ENCODE measurements at regions of chr9 and their contacts with region 1.

Region 1: GRCh38 chr9:83937911-83938323 is 16.7 kb upstream of the KIF27 start:
- DNase-seq: peak in 1 of 2 donors; percentile 81
- H3K4me3 ChIP-seq: no peak overlapping the region
- H3K27ac ChIP-seq: no peak overlapping the region
- H3K4me1 ChIP-seq: peaks cover 8 to 18% (median 15%) of the 10 kb centered on the region in 4 donors
- H3K27me3 ChIP-seq: no peaks in the 10 kb centered on the region
- CTCF ChIP-seq: peak in 4 of 7 experiments; percentile 52 to 68 (median 61)
- EP300 ChIP-seq: no peak
- POLR2A ChIP-seq: no peak

Region 2: DNA sequence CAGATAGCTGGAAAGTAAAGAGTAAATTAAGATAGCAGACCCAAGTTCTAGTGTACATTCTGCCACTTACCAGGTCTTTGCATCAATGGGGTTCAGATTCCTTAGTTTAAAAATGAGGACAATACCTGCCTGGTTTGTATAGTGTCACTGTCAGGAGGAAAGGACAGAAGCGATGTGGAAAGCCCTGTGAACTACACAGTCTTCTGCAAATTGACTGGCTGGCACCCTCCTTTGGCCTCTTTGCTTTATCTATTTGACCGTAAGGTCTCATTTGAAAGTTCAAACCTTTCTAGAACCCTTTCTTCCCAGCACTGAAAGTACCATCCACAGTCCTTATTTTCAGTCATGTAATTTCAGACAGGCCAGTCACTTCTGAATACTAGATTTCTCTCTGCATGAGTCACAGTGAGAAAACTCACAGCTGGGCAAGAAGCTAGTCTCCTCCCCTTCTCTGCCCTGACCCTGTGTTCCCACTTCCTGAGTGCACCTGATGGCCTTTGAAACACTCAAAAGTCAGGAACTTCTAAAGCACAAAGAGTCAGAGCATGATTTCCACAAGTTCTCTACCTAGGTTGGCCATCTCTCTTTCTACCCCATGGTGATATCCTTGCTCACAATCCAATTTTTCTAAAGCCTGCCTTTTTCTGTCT is 783.7 kb before region 1 on chr9:
- intact Hi-C with region 1: no loop called
- DNase-seq: peak; percentile 50 to 77
- H3K4me3 ChIP-seq: no peak overlapping the region
- H3K27ac ChIP-seq: peak overlapping the region; percentile 59 to 79 (median 70)
- H3K4me1 ChIP-seq: peaks cover 0 to 9% (median 7%) of the 10 kb centered on the region in 4 donors
- H3K27me3 ChIP-seq: no peaks in the 10 kb centered on the region
- CTCF ChIP-seq: no peak
- EP300 ChIP-seq: no peak
- POLR2A ChIP-seq: no peak

Region 3: DNA sequence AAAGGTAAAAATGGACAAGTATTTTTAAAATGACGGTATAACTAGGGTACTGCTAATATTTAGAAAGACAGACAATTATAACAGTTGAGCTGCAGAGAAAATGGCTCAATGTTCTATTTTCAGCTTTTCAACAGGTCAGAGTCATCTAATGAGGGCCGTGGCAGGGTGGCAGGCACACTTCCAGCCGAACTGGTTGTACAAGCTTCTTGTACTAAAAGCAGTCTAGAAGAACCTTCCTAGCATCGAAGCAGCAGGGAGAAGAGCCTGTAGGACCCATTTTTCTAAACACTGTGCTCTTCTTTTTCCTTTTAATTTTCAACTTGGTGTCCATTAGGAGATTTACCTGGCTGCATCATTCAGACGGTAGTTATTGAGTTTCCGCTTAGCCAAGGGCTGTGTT is 317.1 kb after region 1 on chr9:
- intact Hi-C with region 1: loop called (anchors 5 kb)
- DNase-seq: peak; percentile 72 to 85
- H3K4me3 ChIP-seq: no peak overlapping the region
- H3K27ac ChIP-seq: no peak overlapping the region
- H3K4me1 ChIP-seq: no peaks in the 10 kb centered on the region
- H3K27me3 ChIP-seq: peaks cover 0 to 4% (median 0%) of the 10 kb centered on the region in 3 donors
- CTCF ChIP-seq: no peak
- EP300 ChIP-seq: no peak
- POLR2A ChIP-seq: no peak

Region 4: GRCh38 chr9:84305452-84306131 is 367.7 kb after region 1 on chr9:
- intact Hi-C with region 1: loop called (anchors 5 kb)
- DNase-seq: no peak
- H3K4me3 ChIP-seq: no peak overlapping the region
- H3K27ac ChIP-seq: no peak overlapping the region
- H3K4me1 ChIP-seq: peaks cover 0 to 9% (median 2%) of the 10 kb centered on the region in 4 donors
- H3K27me3 ChIP-seq: no peaks in the 10 kb centered on the region
- CTCF ChIP-seq: no peak
- EP300 ChIP-seq: no peak
- POLR2A ChIP-seq: no peak